ENCODE measurements at regions of chr7 and their contacts with region 1.

Region 1: GRCh38 chr7:7968543-7969305 is at the start of gene GLCCI1:
- DNase-seq: peak; percentile 98
- H3K4me3 ChIP-seq: peak within 1 kb of the TSS; percentile 82
- H3K4me3 Mint-ChIP-seq: peak within 1 kb of the TSS; percentile 27
- H3K27ac Mint-ChIP-seq: peak within 1 kb of the TSS; percentile 31
- H3K4me1 ChIP-seq: no peaks in the 10 kb centered on the region
- H3K4me1 Mint-ChIP-seq: peaks cover 6% of the 10 kb centered on the region
- H3K27me3 ChIP-seq: no peaks in the 10 kb centered on the region
- H3K27me3 Mint-ChIP-seq: no peaks in the 10 kb centered on the region
- CTCF ChIP-seq: no peak
- total RNA-seq, gene GLCCI1: 18.8 and 19.3 TPM in 2 replicates

Region 2: GRCh38 chr7:7640221-7641128 is 328.2 kb before region 1 on chr7 and contains the start of gene UMAD1:
- CTCF ChIA-PET with region 1: no interaction called
- POLR2A ChIA-PET with region 1: no interaction called
- intact Hi-C with region 1: loop called (anchors 1 kb)
- DNase-seq: peak; percentile 99 to 100
- H3K4me3 ChIP-seq: peak within 1 kb of the TSS; percentile 98
- H3K4me3 Mint-ChIP-seq: peak within 1 kb of the TSS; percentile 88
- H3K27ac Mint-ChIP-seq: peak within 1 kb of the TSS; percentile 97
- H3K4me1 ChIP-seq: peaks cover 15% of the 10 kb centered on the region
- H3K4me1 Mint-ChIP-seq: peaks cover 24% of the 10 kb centered on the region
- H3K27me3 ChIP-seq: no peaks in the 10 kb centered on the region
- H3K27me3 Mint-ChIP-seq: no peaks in the 10 kb centered on the region
- CTCF ChIP-seq: no peak
- total RNA-seq, gene UMAD1: 20.0 and 20.3 TPM in 2 replicates

Measured in Caco-2 (cell line).